Panc1 (cell line): ENCODE measurements at regions of chr4 and their contacts with region 1.

Region 1: GRCh38 chr4:140359562-140360427 is 13.7 kb upstream of the SCOC start:
- DNase-seq: peak; percentile 63
- ATAC-seq: peak; percentile 99
- H3K4me3 ChIP-seq: no peak overlapping the region
- H3K27ac ChIP-seq: no peak overlapping the region
- H3K4me1 ChIP-seq: no peaks in the 10 kb centered on the region
- H3K27me3 ChIP-seq: no peaks in the 10 kb centered on the region
- CTCF ChIP-seq: peak; percentile 86

Region 2: GRCh38 chr4:140343303-140343702 is 16.5 kb before region 1 on chr4:
- CTCF ChIA-PET with region 1: no interaction called
- POLR2A ChIA-PET with region 1: no interaction called
- in situ Hi-C with region 1: no loop called
- intact Hi-C with region 1: no loop called
- DNase-seq: no peak
- ATAC-seq: no peak
- H3K4me3 ChIP-seq: no peak overlapping the region
- H3K27ac ChIP-seq: no peak overlapping the region
- H3K4me1 ChIP-seq: no peaks in the 10 kb centered on the region
- H3K27me3 ChIP-seq: no peaks in the 10 kb centered on the region
- CTCF ChIP-seq: no peak

Region 3: GRCh38 chr4:140609548-140610425 is 250.0 kb after region 1 on chr4:
- CTCF ChIA-PET with region 1: interaction called, 3 read pairs
- POLR2A ChIA-PET with region 1: interaction called, 3 read pairs
- in situ Hi-C with region 1: no loop called
- intact Hi-C with region 1: loop called (anchors 1 kb)
- DNase-seq: peak; percentile 30
- ATAC-seq: peak; percentile 90
- H3K4me3 ChIP-seq: no peak overlapping the region
- H3K27ac ChIP-seq: no peak overlapping the region
- H3K4me1 ChIP-seq: no peaks in the 10 kb centered on the region
- H3K27me3 ChIP-seq: no peaks in the 10 kb centered on the region
- CTCF ChIP-seq: peak; percentile 59

Region 4: GRCh38 chr4:140673729-140674128 is 313.9 kb after region 1 on chr4:
- CTCF ChIA-PET with region 1: no interaction called
- POLR2A ChIA-PET with region 1: no interaction called
- in situ Hi-C with region 1: no loop called
- intact Hi-C with region 1: no loop called
- DNase-seq: no peak
- ATAC-seq: no peak
- H3K4me3 ChIP-seq: no peak overlapping the region
- H3K27ac ChIP-seq: no peak overlapping the region
- H3K4me1 ChIP-seq: no peaks in the 10 kb centered on the region
- H3K27me3 ChIP-seq: no peaks in the 10 kb centered on the region
- CTCF ChIP-seq: no peak